ENCODE measurements at regions of chr11 and their contacts with region 1.

Region 1: DNA sequence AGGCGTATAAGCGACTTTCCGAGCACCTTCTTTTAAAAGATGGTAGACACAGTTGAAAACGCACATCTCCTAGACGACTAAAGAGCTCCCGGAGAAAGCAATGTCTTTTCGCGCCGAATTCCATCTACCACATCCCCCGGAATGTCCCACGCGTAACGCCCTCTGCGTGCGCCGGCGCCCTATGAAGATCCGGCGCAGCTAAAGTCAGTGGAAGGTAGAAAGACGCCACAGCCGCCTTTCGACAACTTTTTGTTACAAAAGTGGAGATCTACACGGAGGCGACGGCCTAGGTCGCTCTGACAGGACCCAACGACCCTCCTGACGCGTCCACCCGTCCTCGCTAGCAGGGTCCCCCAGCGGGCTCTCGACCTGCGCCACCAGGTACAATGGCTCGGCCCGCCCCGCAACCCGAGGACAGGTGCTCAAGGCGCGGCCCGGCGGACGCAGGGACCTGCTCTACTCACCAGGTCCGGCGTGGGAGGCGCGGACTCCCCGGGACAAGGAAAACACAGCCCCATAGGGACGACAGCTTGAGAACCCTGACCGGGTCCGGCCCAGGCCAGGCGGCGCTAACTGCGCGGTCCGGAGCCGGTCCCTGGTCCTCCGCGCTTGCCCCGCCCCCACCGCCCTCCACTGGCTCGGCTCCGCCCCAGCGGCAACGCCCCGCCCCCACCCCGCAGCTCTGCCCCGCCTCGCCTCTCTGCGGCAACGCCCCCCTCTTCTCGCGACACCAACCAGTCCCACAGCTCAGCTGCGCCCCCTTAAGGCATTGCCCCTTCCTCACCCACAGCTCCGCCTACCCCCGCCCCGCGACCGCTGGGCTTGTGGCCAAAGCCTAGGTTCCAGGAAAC is at the start of gene SVIP:
- DNase-seq: peak; percentile 69
- ATAC-seq: peak; percentile 94
- H3K4me3 ChIP-seq: peak within 1 kb of the TSS; percentile 87
- H3K27ac ChIP-seq: peak within 1 kb of the TSS; percentile 59
- H3K4me1 ChIP-seq: no peaks in the 10 kb centered on the region
- H3K27me3 ChIP-seq: no peaks in the 10 kb centered on the region
- CTCF ChIP-seq: peak; percentile 76 to 92 (median 89)
- EP300 ChIP-seq: no peak
- POLR2A ChIP-seq: peak; percentile 91
- RAD21 ChIP-seq: peak; percentile 56
- polyA plus RNA-seq, gene SVIP: 59.0 to 78.0 TPM

Region 2: DNA sequence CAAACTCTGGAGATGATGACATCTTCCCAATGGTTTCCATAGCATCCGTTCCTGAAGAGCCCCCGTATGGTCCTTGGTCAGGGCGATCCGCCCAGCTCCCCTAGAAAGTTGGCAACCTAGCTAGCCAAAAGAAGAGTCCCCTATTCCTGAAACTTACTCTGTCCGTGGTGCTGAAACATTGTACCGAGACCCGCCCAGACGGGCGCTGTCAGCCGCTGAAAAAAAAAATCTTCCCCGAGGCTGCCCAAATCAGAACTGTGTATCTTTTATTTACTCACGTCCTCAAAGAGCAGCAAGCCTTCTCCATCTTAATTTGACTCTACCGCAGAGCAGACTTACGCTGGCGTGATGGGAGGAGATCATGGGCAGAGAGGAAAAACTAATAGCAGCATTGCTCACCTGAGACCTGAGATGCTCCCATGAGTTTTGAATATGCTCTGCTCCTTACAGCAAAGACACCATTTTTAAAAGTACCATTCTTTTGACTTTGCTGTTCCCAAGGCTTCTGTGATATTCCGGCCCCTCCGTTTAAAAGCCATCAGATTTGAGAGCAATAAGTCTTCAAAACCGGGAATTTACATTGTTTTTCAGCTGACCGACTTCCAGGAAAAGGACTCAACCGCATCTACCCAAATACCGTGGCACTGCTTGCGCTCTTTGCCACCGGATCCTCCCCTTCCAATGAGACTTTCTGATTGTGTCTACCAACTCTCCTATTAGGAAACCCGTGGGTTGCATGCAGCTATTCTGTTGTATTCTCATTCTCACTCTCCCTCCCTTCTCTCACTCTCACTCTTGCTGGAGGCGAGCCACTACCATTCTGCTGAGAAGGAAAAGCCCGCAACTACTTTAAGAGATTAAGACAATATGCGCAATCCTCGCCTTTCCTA is 491.6 kb before region 1 on chr11 and contains the start of gene SLC17A6:
- CTCF ChIA-PET with region 1: interaction called, 15 read pairs
- POLR2A ChIA-PET with region 1: no interaction called
- RAD21 ChIA-PET with region 1: interaction called, 4 read pairs
- SMC1A ChIA-PET with region 1: interaction called, 12 read pairs
- in situ Hi-C with region 1: no loop called
- intact Hi-C with region 1: loop called (anchors 2 kb)
- DNase-seq: no peak
- ATAC-seq: peak; percentile 76
- H3K4me3 ChIP-seq: no peak within 1 kb of the TSS
- H3K27ac ChIP-seq: no peak within 1 kb of the TSS
- H3K4me1 ChIP-seq: no peaks in the 10 kb centered on the region
- H3K27me3 ChIP-seq: peaks cover 15 to 24% of the 10 kb centered on the region in 2 experiments
- CTCF ChIP-seq: no peak
- EP300 ChIP-seq: no peak
- POLR2A ChIP-seq: no peak
- RAD21 ChIP-seq: no peak
- polyA plus RNA-seq, gene SLC17A6: not detected

Region 3: GRCh38 chr11:22625448-22626287 is 203.8 kb before region 1 on chr11 and contains the start of gene FANCF:
- CTCF ChIA-PET with region 1: interaction called, 4 read pairs
- POLR2A ChIA-PET with region 1: interaction called, 10 read pairs
- RAD21 ChIA-PET with region 1: interaction called, 3 read pairs
- SMC1A ChIA-PET with region 1: interaction called, 4 read pairs
- in situ Hi-C with region 1: no loop called
- intact Hi-C with region 1: loop called (anchors 2 kb)
- DNase-seq: peak; percentile 100
- ATAC-seq: peak; percentile 95
- H3K4me3 ChIP-seq: peak within 1 kb of the TSS; percentile 85
- H3K27ac ChIP-seq: peak within 1 kb of the TSS; percentile 90
- H3K4me1 ChIP-seq: peaks cover 6% of the 10 kb centered on the region; the same call in 1 of the 2 replicates
- H3K27me3 ChIP-seq: no peaks in the 10 kb centered on the region
- CTCF ChIP-seq: no peak
- EP300 ChIP-seq: no peak
- POLR2A ChIP-seq: peak; percentile 81
- RAD21 ChIP-seq: no peak
- polyA plus RNA-seq, gene FANCF: 1.6 to 3.4 TPM

Region 4: GRCh38 chr11:22809893-22810292 is 19.6 kb before region 1 on chr11:
- CTCF ChIA-PET with region 1: interaction called, 12 read pairs
- POLR2A ChIA-PET with region 1: interaction called, 4 read pairs
- RAD21 ChIA-PET with region 1: interaction called, 3 read pairs
- SMC1A ChIA-PET with region 1: interaction called, 9 read pairs
- in situ Hi-C with region 1: no loop called
- intact Hi-C with region 1: no loop called
- DNase-seq: no peak
- ATAC-seq: no peak
- H3K4me3 ChIP-seq: no peak overlapping the region
- H3K27ac ChIP-seq: no peak overlapping the region
- H3K4me1 ChIP-seq: peaks cover 5% of the 10 kb centered on the region; the same call in 1 of the 2 replicates
- H3K27me3 ChIP-seq: no peaks in the 10 kb centered on the region
- CTCF ChIP-seq: no peak
- EP300 ChIP-seq: no peak
- POLR2A ChIP-seq: no peak
- RAD21 ChIP-seq: no peak

Region 5: DNA sequence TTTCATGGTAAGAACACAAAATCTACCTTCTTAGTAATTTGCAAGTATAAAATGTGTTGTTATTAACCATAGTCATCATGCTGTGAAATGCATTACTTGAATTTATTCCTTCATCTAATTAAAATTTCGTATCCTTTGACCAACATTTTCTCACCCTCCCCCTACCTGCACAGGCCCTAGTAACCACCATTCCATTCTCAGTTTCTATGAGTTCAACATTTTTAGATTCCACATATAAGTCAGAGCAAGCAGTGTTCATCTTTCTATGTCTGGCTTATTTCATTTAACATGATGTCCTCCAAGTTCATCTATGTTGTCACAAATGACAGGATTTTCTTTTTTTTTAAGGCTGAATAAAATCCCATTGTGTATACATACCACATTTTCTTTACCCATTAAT is 74.3 kb after region 1 on chr11:
- CTCF ChIA-PET with region 1: no interaction called
- POLR2A ChIA-PET with region 1: no interaction called
- RAD21 ChIA-PET with region 1: no interaction called
- SMC1A ChIA-PET with region 1: no interaction called
- in situ Hi-C with region 1: no loop called
- intact Hi-C with region 1: no loop called
- DNase-seq: no peak
- ATAC-seq: peak; percentile 55
- H3K4me3 ChIP-seq: no peak overlapping the region
- H3K27ac ChIP-seq: no peak overlapping the region
- H3K4me1 ChIP-seq: no peaks in the 10 kb centered on the region
- H3K27me3 ChIP-seq: no peaks in the 10 kb centered on the region
- CTCF ChIP-seq: no peak
- EP300 ChIP-seq: no peak
- POLR2A ChIP-seq: no peak
- RAD21 ChIP-seq: no peak

Measured in GM12878 (cell line).